H1 (cell line): ENCODE measurements at regions of chr9 and their contacts with region 1.

Region 1: DNA sequence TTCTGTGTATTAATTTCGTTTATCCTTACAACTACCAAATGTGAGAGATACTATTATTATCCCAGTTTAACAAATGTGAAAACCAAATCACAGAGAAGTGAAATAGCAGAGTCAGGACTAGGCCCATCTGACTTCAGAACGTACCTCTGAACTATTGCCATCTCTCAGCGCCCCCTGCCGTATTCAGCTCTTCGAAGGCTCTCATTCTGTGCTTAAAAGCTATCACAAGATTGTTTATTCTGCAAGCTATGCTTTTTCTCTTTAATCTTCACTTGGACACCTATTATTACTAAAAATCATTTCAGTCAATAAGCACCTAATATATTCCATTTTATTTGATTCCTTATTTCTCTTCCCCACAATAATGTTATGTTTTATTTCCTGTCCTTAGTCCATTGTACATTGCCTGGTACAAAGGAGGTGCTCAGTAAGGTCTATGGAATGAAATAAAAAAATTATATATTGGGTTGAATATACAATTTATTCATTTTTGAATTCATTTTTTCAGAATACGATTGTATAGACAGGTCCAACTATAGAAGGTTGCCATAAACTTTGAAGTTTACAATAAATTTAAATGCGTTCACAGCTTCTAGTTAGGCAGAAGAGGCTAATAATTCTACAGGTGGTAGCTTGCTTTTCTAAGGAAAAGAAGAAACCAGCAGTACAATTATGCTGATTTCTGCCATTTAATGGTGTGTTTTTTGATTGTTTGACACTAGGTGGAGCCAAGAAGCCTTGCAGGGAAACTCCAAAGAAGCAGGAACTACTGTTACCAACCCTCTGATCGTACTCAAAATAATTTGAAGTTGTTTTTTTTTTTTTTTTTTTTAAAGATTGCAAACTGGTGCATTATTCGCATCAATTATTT is 202.2 kb upstream of the DMRTA1 start:
- DNase-seq: no peak
- H3K4me3 ChIP-seq: no peak overlapping the region
- H3K27ac ChIP-seq: no peak overlapping the region
- H3K4me1 ChIP-seq: no peaks in the 10 kb centered on the region
- H3K27me3 ChIP-seq: no peaks in the 10 kb centered on the region
- CTCF ChIP-seq: peak in 2 of 3 experiments; percentile 52 to 56; a peak in 3 of 4 replicates
- EP300 ChIP-seq: no peak
- POLR2A ChIP-seq: no peak
- RAD21 ChIP-seq: peak; percentile 63 to 70

Region 2: DNA sequence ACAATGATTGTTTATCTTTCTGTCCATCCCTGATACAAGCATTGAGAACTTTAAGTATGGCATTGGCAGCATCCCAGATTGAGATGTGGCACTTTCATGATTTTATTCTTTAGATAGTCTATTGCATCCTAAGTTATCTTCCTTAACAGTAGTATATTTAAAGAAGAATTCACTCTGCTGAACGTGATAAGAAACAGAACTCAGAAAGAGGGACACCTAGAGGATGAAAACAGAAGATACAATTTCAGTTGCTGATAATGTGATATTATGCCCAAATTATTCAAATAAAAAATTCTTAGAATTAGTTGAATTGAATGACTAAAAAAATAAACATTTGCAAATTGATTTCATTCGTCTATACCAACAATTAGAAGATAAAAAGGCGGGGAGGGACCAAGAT is 15.8 kb before region 1 on chr9:
- CTCF ChIA-PET with region 1: interaction called, 21 read pairs
- POLR2A ChIA-PET with region 1: interaction called, 3 read pairs
- DNase-seq: no peak
- H3K4me3 ChIP-seq: no peak overlapping the region
- H3K27ac ChIP-seq: no peak overlapping the region
- H3K4me1 ChIP-seq: no peaks in the 10 kb centered on the region
- H3K27me3 ChIP-seq: no peaks in the 10 kb centered on the region
- CTCF ChIP-seq: no peak; a peak in 1 of 4 replicates
- EP300 ChIP-seq: no peak
- POLR2A ChIP-seq: no peak
- RAD21 ChIP-seq: no peak

Region 3: DNA sequence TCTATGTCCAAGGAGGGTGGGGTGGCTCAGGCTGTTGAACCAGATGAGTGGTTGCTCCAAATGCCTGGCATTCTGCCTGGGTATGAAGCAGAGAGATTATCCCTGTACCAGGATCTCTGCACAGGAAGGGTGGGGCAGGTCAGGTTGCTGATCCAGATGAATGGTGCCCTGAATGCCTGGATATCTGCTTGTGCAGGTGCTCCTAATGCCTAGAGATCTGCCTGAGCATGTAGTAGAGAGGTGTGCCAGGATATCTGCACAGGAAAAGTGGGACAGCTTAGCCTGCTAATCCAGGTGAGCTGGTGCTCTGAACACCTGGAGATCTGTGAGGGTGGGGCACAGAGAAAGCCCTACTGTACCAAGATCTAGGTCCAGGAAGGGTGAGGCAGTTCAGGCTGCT is 12.7 kb after region 1 on chr9:
- CTCF ChIA-PET with region 1: interaction called, 37 read pairs
- POLR2A ChIA-PET with region 1: no interaction called
- DNase-seq: no peak
- H3K4me3 ChIP-seq: no peak overlapping the region
- H3K27ac ChIP-seq: no peak overlapping the region
- H3K4me1 ChIP-seq: no peaks in the 10 kb centered on the region
- H3K27me3 ChIP-seq: no peaks in the 10 kb centered on the region
- CTCF ChIP-seq: no peak
- EP300 ChIP-seq: no peak
- POLR2A ChIP-seq: no peak
- RAD21 ChIP-seq: no peak

Region 4: DNA sequence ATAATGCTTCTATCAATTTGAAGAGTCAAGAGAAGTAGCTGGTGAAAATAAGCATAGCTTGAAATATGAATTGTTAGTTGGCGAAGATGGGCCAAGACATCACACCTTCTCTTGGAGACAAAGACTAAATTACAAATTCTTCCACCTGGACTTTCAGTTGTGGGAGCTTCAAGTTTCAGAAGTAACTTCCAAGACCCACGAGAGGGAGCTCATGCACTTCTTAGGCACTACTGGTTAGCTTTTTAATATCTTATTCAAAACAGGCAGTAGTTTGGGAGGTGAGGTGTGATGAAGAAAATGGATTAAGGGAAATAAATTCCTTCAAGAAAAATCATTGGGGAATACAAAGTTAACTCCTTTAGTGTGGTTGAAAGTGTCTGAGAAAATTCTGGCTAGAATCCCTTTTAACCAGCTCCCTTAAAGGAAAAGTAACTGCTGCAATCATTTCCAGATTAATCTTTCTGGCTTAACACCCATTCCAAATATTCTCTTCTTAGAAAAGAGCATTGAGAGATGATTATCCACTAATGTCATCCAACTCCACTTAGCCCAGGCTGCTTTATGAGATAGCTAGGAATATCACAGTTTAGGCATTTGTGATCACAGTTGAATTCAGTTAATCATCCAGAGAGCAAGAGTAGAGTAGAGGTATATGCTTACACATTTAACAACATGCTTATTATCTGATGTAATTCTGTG is 62.8 kb after region 1 on chr9:
- CTCF ChIA-PET with region 1: no interaction called
- POLR2A ChIA-PET with region 1: no interaction called
- DNase-seq: no peak
- H3K4me3 ChIP-seq: no peak overlapping the region
- H3K27ac ChIP-seq: no peak overlapping the region
- H3K4me1 ChIP-seq: no peaks in the 10 kb centered on the region
- H3K27me3 ChIP-seq: no peaks in the 10 kb centered on the region
- CTCF ChIP-seq: peak in 2 of 3 experiments; percentile 60 to 79; a peak in 3 of 4 replicates
- EP300 ChIP-seq: no peak
- POLR2A ChIP-seq: no peak
- RAD21 ChIP-seq: peak; percentile 92 to 95

Region 5: DNA sequence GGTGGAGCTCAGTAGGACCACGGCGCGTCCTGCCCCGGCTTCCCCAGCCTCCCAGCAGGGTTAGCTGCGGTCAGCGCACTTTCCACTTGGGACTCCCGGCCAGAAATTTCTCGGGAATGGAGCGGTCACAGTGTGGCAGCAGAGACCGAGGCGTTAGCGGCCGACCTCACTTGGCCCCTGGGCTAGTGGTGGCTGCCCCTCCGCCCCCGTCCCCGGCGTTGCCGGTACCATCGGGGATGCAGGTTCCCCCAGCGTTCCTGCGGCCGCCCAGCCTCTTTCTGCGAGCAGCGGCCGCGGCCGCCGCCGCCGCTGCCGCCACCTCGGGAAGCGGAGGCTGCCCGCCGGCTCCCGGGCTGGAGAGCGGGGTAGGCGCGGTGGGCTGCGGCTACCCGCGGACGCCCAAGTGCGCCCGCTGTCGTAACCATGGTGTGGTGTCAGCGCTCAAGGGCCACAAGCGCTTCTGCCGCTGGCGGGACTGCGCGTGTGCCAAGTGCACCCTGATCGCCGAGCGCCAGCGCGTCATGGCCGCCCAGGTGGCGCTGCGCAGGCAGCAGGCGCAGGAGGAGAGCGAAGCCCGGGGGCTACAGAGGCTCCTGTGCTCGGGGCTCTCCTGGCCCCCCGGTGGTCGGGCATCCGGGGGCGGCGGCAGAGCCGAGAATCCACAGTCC is 202.7 kb after region 1 on chr9:
- CTCF ChIA-PET with region 1: interaction called, 12 read pairs
- POLR2A ChIA-PET with region 1: interaction called, 4 read pairs
- DNase-seq: peak; percentile 46 to 86
- H3K4me3 ChIP-seq: peak overlapping the region; percentile 60 to 89 (median 80)
- H3K27ac ChIP-seq: peak overlapping the region; percentile 42; the same call in 1 of the 2 replicates
- H3K4me1 ChIP-seq: peaks cover 0 to 4% (median 1%) of the 10 kb centered on the region in 4 experiments; a peak in 1 of 7 replicates
- H3K27me3 ChIP-seq: peaks cover 0 to 3% (median 0%) of the 10 kb centered on the region in 4 experiments; a peak in 3 of 7 replicates
- CTCF ChIP-seq: peak in 1 of 3 experiments; percentile 36; a peak in 1 of 4 replicates
- EP300 ChIP-seq: no peak
- POLR2A ChIP-seq: peak in 1 of 2 experiments; percentile 51; a peak in 1 of 3 replicates
- RAD21 ChIP-seq: peak in 1 of 2 experiments; percentile 19; a peak in 2 of 4 replicates

Region 6: GRCh38 chr9:22452415-22453010 is 208.1 kb after region 1 on chr9:
- CTCF ChIA-PET with region 1: interaction called, 12 read pairs
- POLR2A ChIA-PET with region 1: interaction called, 4 read pairs
- DNase-seq: no peak
- H3K4me3 ChIP-seq: no peak overlapping the region
- H3K27ac ChIP-seq: no peak overlapping the region
- H3K4me1 ChIP-seq: peaks cover 0 to 4% (median 1%) of the 10 kb centered on the region in 4 experiments; a peak in 1 of 7 replicates
- H3K27me3 ChIP-seq: peaks cover 0 to 3% (median 0%) of the 10 kb centered on the region in 4 experiments; a peak in 2 of 7 replicates
- CTCF ChIP-seq: peak in 2 of 3 experiments; percentile 57 to 58; a peak in 2 of 4 replicates
- EP300 ChIP-seq: no peak
- POLR2A ChIP-seq: no peak
- RAD21 ChIP-seq: peak; percentile 72 to 77